Sigmoid colon (tissue), 7 donors: ENCODE measurements at regions of chr22 and their contacts with region 1.

Region 1: GRCh38 chr22:36387752-36388518 is at the start of gene MYH9:
- DNase-seq: peak; percentile 100
- H3K4me3 ChIP-seq: peak within 1 kb of the TSS; percentile 95 to 99 (median 98)
- H3K27ac ChIP-seq: peak within 1 kb of the TSS; percentile 98 to 100 (median 100)
- H3K4me1 ChIP-seq: peaks cover 0 to 38% (median 26%) of the 10 kb centered on the region in 4 donors
- H3K27me3 ChIP-seq: no peaks in the 10 kb centered on the region
- CTCF ChIP-seq: no peak
- EP300 ChIP-seq: peak in 1 of 4 donors; percentile 94
- POLR2A ChIP-seq: peak; percentile 96 to 98
- total RNA-seq, gene MYH9: 147 to 273 (median 184) TPM

Region 2: GRCh38 chr22:36329254-36330078 is 58.5 kb before region 1 on chr22:
- intact Hi-C with region 1: loop called (anchors 2 kb)
- DNase-seq: no peak
- H3K4me3 ChIP-seq: peak overlapping the region in 3 of 4 donors; percentile 7 to 32 (median 11)
- H3K27ac ChIP-seq: peak overlapping the region; percentile 96 to 100 (median 99)
- H3K4me1 ChIP-seq: peaks cover 4 to 100% (median 100%) of the 10 kb centered on the region in 4 donors
- H3K27me3 ChIP-seq: no peaks in the 10 kb centered on the region
- CTCF ChIP-seq: no peak
- EP300 ChIP-seq: peak in 3 of 4 donors; percentile 37 to 94 (median 85)
- POLR2A ChIP-seq: peak in 1 of 2 donors; percentile 18

Region 3: GRCh38 chr22:36454916-36455570 is 67.1 kb after region 1 on chr22:
- intact Hi-C with region 1: loop called (anchors 1 kb)
- DNase-seq: peak; percentile 97
- H3K4me3 ChIP-seq: peak overlapping the region; percentile 51 to 61 (median 59)
- H3K27ac ChIP-seq: peak overlapping the region; percentile 92 to 98 (median 96)
- H3K4me1 ChIP-seq: peaks cover 0 to 63% (median 54%) of the 10 kb centered on the region in 4 donors
- H3K27me3 ChIP-seq: no peaks in the 10 kb centered on the region
- CTCF ChIP-seq: peak in 1 of 4 experiments; percentile 24
- EP300 ChIP-seq: peak; percentile 13 to 83 (median 44)
- POLR2A ChIP-seq: peak; percentile 68 to 81